Heart left ventricle (tissue), 16 donors: ENCODE measurements at regions of chr10 and their contacts with region 1.

Region 1: GRCh38 chr10:63976538-63976937 is 455.3 kb downstream of the REEP3 start:
- DNase-seq: peak in 1 of 5 donors; percentile 36
- ATAC-seq: peak in 3 of 4 donors; percentile 62 to 71 (median 67)
- H3K4me3 ChIP-seq: no peak overlapping the region
- H3K27ac ChIP-seq: no peak overlapping the region
- H3K4me1 ChIP-seq: no peaks in the 10 kb centered on the region
- H3K27me3 ChIP-seq: no peaks in the 10 kb centered on the region
- CTCF ChIP-seq: peak in 10 of 12 donors; percentile 19 to 58 (median 36)
- POLR2A ChIP-seq: no peak

Region 2: DNA sequence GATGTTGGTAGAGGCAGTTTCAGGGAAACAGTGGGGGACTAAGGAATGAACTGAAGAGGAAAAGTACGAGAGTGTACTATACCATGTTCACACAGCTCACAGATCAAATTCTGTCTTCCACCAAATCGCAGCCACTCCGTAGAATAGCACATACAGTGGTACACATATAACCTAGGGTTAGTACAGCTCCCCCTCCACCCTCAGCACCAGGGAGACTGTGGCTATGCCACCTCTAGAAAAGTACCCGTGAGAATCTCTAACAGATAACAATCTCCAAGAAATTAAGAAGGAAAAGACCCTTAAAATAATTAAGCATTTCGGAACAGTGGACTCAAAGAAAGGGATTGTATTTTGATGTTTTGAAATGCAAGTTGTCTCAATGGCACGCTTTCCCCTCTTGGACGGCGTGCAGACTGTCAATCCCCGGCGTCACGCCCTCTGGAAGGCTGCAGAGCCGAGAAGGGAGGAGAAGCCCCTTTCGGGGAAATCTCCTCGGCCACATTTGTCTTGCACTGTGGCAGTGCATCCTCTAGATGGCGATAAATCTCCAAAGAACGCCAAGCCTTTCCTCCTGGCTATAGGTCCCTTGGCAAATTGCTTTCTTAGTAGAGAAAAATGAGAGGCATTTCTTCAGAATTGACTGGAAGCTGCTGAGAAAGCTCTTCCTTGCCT is 110.3 kb before region 1 on chr10:
- intact Hi-C with region 1: loop called in 4 of 10 experiments (anchors 5 to 10 kb)
- DNase-seq: peak in 4 of 5 donors; percentile 20 to 39 (median 31)
- ATAC-seq: peak in 3 of 4 donors; percentile 60 to 76 (median 62)
- H3K4me3 ChIP-seq: peak overlapping the region in 5 of 12 donors; percentile 2 to 18 (median 9)
- H3K27ac ChIP-seq: no peak overlapping the region
- H3K4me1 ChIP-seq: peaks cover 0 to 12% (median 4%) of the 10 kb centered on the region in 12 donors
- H3K27me3 ChIP-seq: peaks cover 0 to 25% (median 3%) of the 10 kb centered on the region in 9 donors
- CTCF ChIP-seq: peak; percentile 70 to 87 (median 81)
- POLR2A ChIP-seq: no peak

Region 3: DNA sequence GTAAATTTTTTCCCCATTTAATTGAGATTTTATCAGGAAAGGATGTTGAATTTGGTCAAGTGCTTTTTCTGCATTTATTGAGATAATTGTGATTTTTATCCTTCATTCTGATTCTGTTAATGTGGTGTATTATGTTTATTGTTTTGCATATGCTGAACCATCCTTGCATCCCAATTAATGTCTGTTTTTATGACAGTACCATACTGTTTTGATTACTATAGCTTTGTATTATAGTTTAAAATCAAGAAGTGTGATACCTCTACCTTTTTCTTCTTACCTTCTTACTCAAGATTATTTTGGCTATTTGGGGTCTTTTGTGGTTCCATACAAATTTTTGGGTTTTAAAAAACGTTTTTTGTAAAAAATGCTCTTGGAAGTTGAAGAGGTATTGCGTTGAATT is 98.1 kb before region 1 on chr10:
- intact Hi-C with region 1: loop called in 8 of 10 experiments (anchors 2 to 10 kb)
- DNase-seq: no peak
- ATAC-seq: no peak
- H3K4me3 ChIP-seq: no peak overlapping the region
- H3K27ac ChIP-seq: no peak overlapping the region
- H3K4me1 ChIP-seq: no peaks in the 10 kb centered on the region
- H3K27me3 ChIP-seq: no peaks in the 10 kb centered on the region
- CTCF ChIP-seq: no peak
- POLR2A ChIP-seq: no peak

Region 4: DNA sequence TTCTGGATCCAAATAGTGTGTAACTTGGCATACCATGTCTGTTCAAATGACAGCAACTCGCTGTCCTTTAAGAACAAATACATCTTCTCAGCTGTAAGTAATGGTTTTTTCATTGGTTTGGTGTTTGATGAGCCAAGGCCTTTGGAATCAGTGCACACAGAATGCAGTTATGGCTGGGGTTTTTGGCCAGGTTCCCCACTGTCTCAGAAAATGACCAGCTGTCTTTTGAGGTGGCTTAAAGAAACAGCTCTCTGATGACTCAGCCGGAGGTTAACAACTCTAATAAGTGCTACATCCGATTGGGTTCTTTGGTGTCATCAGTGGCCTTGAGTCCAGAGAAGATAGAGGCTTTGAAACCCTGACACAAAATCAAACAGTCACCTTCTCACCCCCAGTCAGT is 233.0 kb after region 1 on chr10:
- intact Hi-C with region 1: no loop called
- DNase-seq: peak in 4 of 5 donors; percentile 23 to 65 (median 60)
- ATAC-seq: peak in 3 of 4 donors; percentile 50 to 92 (median 80)
- H3K4me3 ChIP-seq: no peak overlapping the region
- H3K27ac ChIP-seq: peak overlapping the region in 4 of 12 donors; percentile 1 to 68 (median 34)
- H3K4me1 ChIP-seq: no peaks in the 10 kb centered on the region
- H3K27me3 ChIP-seq: no peaks in the 10 kb centered on the region
- CTCF ChIP-seq: no peak
- POLR2A ChIP-seq: no peak